ENCODE measurements at regions of chr10 and their contacts with region 1.

Region 1: GRCh38 chr10:14758994-14759664 is 15.6 kb downstream of the FAM107B start:
- DNase-seq: peak; percentile 48
- ATAC-seq: peak; percentile 97
- H3K4me3 ChIP-seq: no peak overlapping the region
- H3K27ac ChIP-seq: no peak overlapping the region
- H3K4me1 ChIP-seq: peaks cover 0 to 2% of the 10 kb centered on the region in 2 experiments; a peak in 1 of 4 replicates
- H3K27me3 ChIP-seq: 0 out of 2 replicates have a peak, but pooled peaks cover 3% of the 10 kb centered on the region
- CTCF ChIP-seq: peak; percentile 62 to 70 (median 68)
- POLR2A ChIP-seq: no peak
- RAD21 ChIP-seq: peak; percentile 62

Region 2: GRCh38 chr10:14536241-14537213 is 222.6 kb before region 1 on chr10:
- CTCF ChIA-PET with region 1: no interaction called
- POLR2A ChIA-PET with region 1: no interaction called
- RAD21 ChIA-PET with region 1: no interaction called
- intact Hi-C with region 1: loop called (anchors 1 kb)
- DNase-seq: peak; percentile 54
- ATAC-seq: peak; percentile 99
- H3K4me3 ChIP-seq: no peak overlapping the region
- H3K27ac ChIP-seq: no peak overlapping the region
- H3K4me1 ChIP-seq: peaks cover 0 to 17% of the 10 kb centered on the region in 2 experiments; a peak in 2 of 4 replicates
- H3K27me3 ChIP-seq: no peaks in the 10 kb centered on the region
- CTCF ChIP-seq: peak; percentile 65 to 80 (median 69)
- POLR2A ChIP-seq: no peak
- RAD21 ChIP-seq: peak; percentile 88

Measured in HCT116 (cell line).